Caco-2 (cell line): ENCODE measurements at regions of chr7 and their contacts with region 1.

Region 1: DNA sequence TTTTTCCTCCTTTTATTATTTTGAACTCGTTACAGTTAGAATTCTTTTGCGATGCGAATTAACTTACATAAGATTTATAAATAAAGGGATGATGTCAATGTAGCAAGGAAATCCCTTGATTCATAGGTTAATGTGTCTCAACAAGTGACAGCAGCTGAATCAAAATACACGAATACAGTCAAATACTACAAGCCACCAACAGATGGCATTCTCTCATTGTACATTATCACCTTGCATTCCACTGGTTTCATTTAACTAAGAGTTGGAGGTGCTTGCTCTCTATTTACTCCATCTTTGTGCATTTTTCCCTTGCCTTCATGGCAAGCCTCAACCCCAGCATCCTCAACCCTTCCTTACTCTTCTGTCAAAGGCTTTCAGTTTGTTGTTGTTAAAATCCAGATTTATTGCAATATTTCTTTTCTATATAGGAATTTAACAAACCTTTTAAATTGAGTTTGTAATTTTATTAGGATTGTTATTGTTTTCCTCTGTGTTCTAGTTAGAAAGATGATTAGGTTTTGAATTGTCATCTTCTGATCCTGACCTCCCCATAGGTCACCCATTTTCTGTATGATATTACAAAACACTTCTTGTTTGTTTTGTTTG is 78.3 kb downstream of the SLC25A40 start:
- DNase-seq: peak in 1 of 2 experiments; percentile 45
- H3K4me3 ChIP-seq: no peak overlapping the region
- H3K4me3 Mint-ChIP-seq: no peak overlapping the region
- H3K27ac Mint-ChIP-seq: no peak overlapping the region
- H3K4me1 ChIP-seq: no peaks in the 10 kb centered on the region
- H3K4me1 Mint-ChIP-seq: no peaks in the 10 kb centered on the region
- H3K27me3 ChIP-seq: no peaks in the 10 kb centered on the region
- H3K27me3 Mint-ChIP-seq: peaks cover 3% of the 10 kb centered on the region
- CTCF ChIP-seq: peak; percentile 61 to 66

Region 2: DNA sequence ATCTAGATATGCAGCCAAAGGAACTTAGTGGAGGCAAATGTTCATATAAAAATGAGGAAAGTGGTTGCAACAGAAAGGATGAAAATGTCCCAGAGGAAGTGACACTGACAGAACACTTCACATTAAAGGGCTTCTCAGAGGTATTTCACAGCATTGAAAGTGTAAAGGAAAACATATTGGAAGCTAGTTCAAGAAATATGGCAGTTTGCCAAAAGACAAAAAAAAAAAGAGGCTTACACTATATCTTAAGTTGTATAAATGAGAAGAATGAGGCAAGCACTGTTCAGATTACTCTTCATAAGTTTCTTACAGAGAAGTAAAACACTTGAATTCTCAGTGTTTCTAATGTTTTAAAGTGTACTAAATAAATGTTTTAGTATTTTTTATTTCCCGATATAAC is 149.6 kb before region 1 on chr7:
- CTCF ChIA-PET with region 1: no interaction called
- POLR2A ChIA-PET with region 1: no interaction called
- intact Hi-C with region 1: no loop called
- DNase-seq: no peak
- H3K4me3 ChIP-seq: no peak overlapping the region
- H3K4me3 Mint-ChIP-seq: no peak overlapping the region
- H3K27ac Mint-ChIP-seq: no peak overlapping the region
- H3K4me1 ChIP-seq: no peaks in the 10 kb centered on the region
- H3K4me1 Mint-ChIP-seq: no peaks in the 10 kb centered on the region
- H3K27me3 ChIP-seq: no peaks in the 10 kb centered on the region
- H3K27me3 Mint-ChIP-seq: peaks cover 5% of the 10 kb centered on the region
- CTCF ChIP-seq: no peak

Region 3: DNA sequence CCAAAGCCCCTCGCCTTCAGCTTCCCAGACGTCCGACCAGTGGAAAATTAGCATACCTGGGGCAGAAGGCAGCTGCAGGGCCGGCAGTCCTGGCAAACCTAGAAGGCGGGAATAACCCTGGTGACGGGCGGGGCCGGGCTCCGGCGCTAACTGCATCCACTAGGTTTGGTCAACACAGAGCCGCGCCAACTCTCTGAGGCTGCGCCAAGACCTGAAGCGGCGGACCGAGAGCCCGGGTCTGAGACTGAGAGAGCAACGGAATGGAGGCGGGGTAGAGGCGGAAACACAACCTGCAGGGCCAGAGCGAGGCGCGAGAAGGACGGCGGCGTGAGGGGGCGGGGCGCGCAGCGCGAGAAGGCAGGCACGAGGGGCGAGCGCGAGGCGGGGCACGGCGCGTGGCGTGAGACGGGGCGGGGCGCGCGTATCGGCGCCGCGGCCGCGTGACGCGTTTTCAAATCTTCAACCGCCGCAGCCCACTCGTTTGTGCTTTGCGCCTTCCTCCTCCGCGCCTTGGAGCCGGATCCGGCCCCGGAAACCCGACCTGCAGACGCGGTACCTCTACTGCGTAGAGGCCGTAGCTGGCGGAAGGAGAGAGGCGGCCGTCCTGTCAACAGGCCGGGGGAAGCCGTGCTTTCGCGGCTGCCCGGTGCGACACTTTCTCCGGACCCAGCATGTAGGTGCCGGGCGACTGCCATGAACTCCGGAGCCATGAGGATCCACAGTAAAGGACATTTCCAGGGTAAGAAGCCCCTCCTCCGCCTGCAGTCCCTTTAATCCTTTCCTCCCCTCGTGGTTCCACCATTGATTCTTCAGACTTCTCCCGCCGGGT is 78.4 kb after region 1 on chr7 and contains the starts of genes DBF4 and SLC25A40:
- CTCF ChIA-PET with region 1: no interaction called
- POLR2A ChIA-PET with region 1: no interaction called
- intact Hi-C with region 1: loop called (anchors 2 kb)
- DNase-seq: peak; percentile 98 to 99
- H3K4me3 ChIP-seq: peak within 1 kb of the TSS; percentile 61
- H3K4me3 Mint-ChIP-seq: peak within 1 kb of the TSS; percentile 70
- H3K27ac Mint-ChIP-seq: peak within 1 kb of the TSS; percentile 99
- H3K4me1 ChIP-seq: peaks cover 20% of the 10 kb centered on the region
- H3K4me1 Mint-ChIP-seq: peaks cover 28% of the 10 kb centered on the region
- H3K27me3 ChIP-seq: no peaks in the 10 kb centered on the region
- H3K27me3 Mint-ChIP-seq: no peaks in the 10 kb centered on the region
- CTCF ChIP-seq: no peak
- total RNA-seq, gene DBF4: 55.0 and 62.8 TPM in 2 replicates
- total RNA-seq, gene SLC25A40: 21.1 and 21.8 TPM in 2 replicates

Region 4: DNA sequence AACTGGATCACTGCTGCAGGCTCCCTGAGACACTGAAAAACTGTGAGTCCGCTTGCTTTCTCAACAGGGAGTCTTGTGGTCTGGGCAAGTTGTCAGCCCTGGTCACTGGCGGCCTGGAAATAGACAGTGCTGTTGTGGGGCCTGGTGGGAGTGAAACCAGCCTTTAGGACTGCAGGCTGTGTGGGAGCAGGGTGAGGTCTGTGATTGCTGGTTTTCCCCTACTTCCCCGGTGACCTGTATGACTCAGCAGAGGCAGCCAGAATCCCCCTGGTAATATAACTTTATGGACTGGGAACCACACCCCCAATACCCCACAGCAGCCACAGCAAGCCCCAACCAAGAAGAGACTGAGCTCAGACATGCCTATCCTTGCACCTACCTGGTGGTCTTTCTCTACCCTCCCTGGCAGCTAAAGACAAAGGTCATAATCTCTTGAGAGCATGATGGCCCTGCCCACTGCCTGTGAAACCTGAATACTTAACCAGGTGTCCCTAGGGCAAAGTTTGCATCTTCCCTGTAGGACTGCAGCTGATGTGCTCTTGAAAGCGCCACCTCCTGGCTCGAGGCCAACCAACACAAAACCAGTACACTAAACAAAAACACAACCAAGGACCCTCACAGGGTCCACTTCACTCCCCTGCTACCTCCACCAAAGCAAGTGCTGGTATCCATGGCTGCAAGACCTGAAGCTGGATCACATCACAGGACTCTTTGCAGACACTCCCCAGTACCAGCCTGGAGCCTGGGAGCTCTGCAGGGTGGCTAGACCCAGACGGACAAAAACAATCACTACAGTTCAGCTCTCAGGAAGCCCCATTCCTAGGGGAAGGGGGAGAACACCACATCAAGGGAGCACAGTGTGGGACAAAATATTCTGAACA is 128.9 kb after region 1 on chr7:
- CTCF ChIA-PET with region 1: no interaction called
- POLR2A ChIA-PET with region 1: no interaction called
- intact Hi-C with region 1: loop called (anchors 1 kb)
- DNase-seq: peak; percentile 47 to 71
- H3K4me3 ChIP-seq: no peak overlapping the region
- H3K4me3 Mint-ChIP-seq: no peak overlapping the region
- H3K27ac Mint-ChIP-seq: peak overlapping the region; percentile 27
- H3K4me1 ChIP-seq: peaks cover 8% of the 10 kb centered on the region
- H3K4me1 Mint-ChIP-seq: no peaks in the 10 kb centered on the region
- H3K27me3 ChIP-seq: no peaks in the 10 kb centered on the region
- H3K27me3 Mint-ChIP-seq: peaks cover 8% of the 10 kb centered on the region
- CTCF ChIP-seq: peak; percentile 28 to 34

Region 5: GRCh38 chr7:88040694-88041093 is 242.8 kb after region 1 on chr7:
- CTCF ChIA-PET with region 1: no interaction called
- POLR2A ChIA-PET with region 1: no interaction called
- intact Hi-C with region 1: no loop called
- DNase-seq: no peak
- H3K4me3 ChIP-seq: no peak overlapping the region
- H3K4me3 Mint-ChIP-seq: no peak overlapping the region
- H3K27ac Mint-ChIP-seq: no peak overlapping the region
- H3K4me1 ChIP-seq: no peaks in the 10 kb centered on the region
- H3K4me1 Mint-ChIP-seq: peaks cover 5% of the 10 kb centered on the region
- H3K27me3 ChIP-seq: no peaks in the 10 kb centered on the region
- H3K27me3 Mint-ChIP-seq: no peaks in the 10 kb centered on the region
- CTCF ChIP-seq: no peak

Region 6: DNA sequence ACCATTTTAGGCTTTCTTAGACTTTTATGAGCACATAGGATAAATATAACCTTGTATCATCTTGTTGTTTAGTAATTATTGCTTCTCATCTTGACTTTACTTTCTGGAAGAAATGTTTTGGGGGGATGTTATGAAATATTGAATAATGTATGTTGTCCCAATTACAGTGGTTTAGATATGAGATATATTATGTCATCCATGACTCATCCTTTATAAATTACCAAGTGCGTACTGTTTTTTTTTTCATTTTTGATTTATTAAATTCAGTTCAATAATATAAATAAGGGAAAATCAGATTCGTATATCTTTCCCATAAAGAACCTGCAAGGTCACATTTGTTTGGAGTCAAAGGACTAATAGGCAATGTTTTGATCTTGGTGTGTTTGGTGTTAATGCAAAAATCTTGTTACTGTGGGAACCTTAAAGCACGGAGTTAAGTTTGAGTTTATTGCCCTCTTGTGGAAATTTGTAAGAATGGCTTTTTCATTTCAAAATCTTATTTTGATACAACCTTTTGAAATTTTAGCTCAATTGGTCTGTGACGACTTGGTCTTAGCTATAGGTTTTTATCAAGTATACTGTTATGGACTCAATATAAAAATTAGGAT is 313.3 kb after region 1 on chr7:
- CTCF ChIA-PET with region 1: interaction called, 9 read pairs
- POLR2A ChIA-PET with region 1: no interaction called
- intact Hi-C with region 1: loop called (anchors 1 kb)
- DNase-seq: peak in 1 of 2 experiments; percentile 24
- H3K4me3 ChIP-seq: no peak overlapping the region
- H3K4me3 Mint-ChIP-seq: no peak overlapping the region
- H3K27ac Mint-ChIP-seq: no peak overlapping the region
- H3K4me1 ChIP-seq: no peaks in the 10 kb centered on the region
- H3K4me1 Mint-ChIP-seq: no peaks in the 10 kb centered on the region
- H3K27me3 ChIP-seq: no peaks in the 10 kb centered on the region
- H3K27me3 Mint-ChIP-seq: no peaks in the 10 kb centered on the region
- CTCF ChIP-seq: peak; percentile 34 to 63

Region 7: DNA sequence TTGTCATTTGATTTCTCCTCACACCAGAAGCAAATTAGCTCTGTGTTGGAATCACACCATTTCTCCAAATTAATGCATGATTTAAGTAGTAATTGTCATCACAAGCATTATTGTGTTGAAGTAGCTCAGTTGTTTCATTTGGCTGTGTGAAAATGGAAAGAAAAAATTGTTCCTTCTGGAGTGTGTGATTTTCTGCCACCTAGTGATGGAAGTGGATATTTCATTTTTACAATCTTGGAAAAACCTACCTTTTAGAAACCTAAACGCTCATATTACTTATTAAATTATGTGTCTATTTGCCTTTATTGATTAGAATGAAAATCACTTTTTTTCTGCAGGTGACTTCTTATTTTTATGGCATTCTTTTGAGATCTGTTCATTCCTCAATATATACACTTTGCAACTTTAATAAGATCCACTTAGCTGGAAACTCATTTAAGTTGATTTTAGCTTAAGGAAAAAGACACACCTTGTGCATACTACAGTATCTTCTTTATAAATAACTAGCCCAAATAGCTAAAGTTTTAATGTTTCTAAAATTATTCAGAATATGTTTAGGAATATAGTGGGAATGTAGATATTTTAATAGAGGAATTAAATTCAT is 371.9 kb after region 1 on chr7:
- CTCF ChIA-PET with region 1: interaction called, 3 read pairs
- POLR2A ChIA-PET with region 1: no interaction called
- intact Hi-C with region 1: loop called (anchors 1 kb)
- DNase-seq: peak in 1 of 2 experiments; percentile 13
- H3K4me3 ChIP-seq: no peak overlapping the region
- H3K4me3 Mint-ChIP-seq: no peak overlapping the region
- H3K27ac Mint-ChIP-seq: no peak overlapping the region
- H3K4me1 ChIP-seq: no peaks in the 10 kb centered on the region
- H3K4me1 Mint-ChIP-seq: no peaks in the 10 kb centered on the region
- H3K27me3 ChIP-seq: no peaks in the 10 kb centered on the region
- H3K27me3 Mint-ChIP-seq: no peaks in the 10 kb centered on the region
- CTCF ChIP-seq: peak in 1 of 2 experiments; percentile 54